Activated CD4-positive, alpha-beta memory T cell treated with anti-CD3 and anti-CD28 coated beads for 36 hours (primary cell): ENCODE measurements at regions of chr4 and their contacts with region 1.

Region 1: DNA sequence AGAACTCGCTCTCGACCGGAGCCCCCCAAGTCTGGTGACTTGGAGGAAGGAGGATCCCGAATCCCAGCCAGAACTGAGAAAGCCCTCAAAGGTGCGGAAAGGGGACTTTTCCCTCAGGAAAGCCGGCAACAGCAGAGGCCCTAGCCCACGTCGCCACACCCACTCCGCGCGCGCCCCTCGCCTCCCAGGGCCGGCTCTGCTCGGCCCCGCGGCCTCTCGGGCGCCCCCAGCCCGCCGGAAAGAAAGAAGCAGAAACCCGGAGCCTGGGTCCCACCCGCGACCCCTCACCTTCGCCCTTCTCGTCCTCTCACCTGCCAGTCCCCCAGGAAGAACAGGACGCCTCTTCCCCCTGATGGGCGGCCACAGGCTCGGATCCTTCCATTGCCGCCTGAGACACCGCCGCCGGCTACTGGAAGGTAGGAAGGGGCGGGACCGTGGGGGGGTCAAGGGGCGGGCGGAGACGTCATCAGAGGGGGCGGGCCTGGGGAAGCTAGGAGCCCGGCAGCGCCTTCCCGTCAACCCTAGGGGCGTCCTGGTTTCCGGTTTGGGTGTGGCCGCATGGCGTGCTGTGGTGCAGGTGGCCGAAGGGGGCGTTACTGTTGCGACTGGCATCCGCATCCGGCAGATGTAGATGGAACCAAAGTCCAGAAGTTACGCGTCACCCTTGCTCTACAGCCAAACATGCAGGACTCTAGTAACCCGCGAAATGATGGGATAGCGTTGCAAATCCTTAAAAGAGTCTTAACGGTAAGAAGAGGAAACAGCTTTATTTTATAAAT is at the start of gene UBA6:
- DNase-seq: peak; percentile 98
- H3K4me3 Mint-ChIP-seq: peak within 1 kb of the TSS; percentile 92
- H3K27ac Mint-ChIP-seq: peak within 1 kb of the TSS; percentile 90
- H3K4me1 Mint-ChIP-seq: peaks cover 55% of the 10 kb centered on the region
- H3K27me3 Mint-ChIP-seq: no peaks in the 10 kb centered on the region
- total RNA-seq, gene UBA6: 107 to 112 TPM

Region 2: DNA sequence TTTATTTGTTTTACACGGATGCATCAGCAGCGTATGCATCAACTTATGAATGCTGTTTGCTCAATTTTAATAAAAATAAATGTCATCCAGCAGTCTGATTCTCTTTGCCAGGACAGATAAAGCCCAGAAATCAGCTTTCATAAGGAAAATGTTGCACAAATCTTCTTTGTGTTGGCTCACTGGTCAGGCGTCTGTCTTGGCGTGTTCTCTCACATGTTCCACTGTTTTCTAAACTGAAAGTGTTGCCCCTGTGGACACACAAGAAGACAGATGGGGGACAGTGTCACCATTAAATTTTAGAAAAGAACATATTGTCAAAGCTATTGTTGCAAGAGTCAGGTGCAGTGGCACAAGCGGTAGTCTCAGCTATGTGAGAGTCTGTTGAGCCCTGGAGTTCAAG is 471.8 kb before region 1 on chr4:
- CTCF ChIA-PET with region 1: no interaction called
- POLR2A ChIA-PET with region 1: no interaction called
- intact Hi-C with region 1: no loop called
- DNase-seq: no peak
- H3K4me3 Mint-ChIP-seq: no peak overlapping the region
- H3K27ac Mint-ChIP-seq: no peak overlapping the region
- H3K4me1 Mint-ChIP-seq: no peaks in the 10 kb centered on the region
- H3K27me3 Mint-ChIP-seq: no peaks in the 10 kb centered on the region

Region 3: GRCh38 chr4:67380154-67380553 is 320.8 kb before region 1 on chr4:
- CTCF ChIA-PET with region 1: no interaction called
- POLR2A ChIA-PET with region 1: no interaction called
- intact Hi-C with region 1: no loop called
- DNase-seq: no peak
- H3K4me3 Mint-ChIP-seq: no peak overlapping the region
- H3K27ac Mint-ChIP-seq: no peak overlapping the region
- H3K4me1 Mint-ChIP-seq: no peaks in the 10 kb centered on the region
- H3K27me3 Mint-ChIP-seq: no peaks in the 10 kb centered on the region

Region 4: DNA sequence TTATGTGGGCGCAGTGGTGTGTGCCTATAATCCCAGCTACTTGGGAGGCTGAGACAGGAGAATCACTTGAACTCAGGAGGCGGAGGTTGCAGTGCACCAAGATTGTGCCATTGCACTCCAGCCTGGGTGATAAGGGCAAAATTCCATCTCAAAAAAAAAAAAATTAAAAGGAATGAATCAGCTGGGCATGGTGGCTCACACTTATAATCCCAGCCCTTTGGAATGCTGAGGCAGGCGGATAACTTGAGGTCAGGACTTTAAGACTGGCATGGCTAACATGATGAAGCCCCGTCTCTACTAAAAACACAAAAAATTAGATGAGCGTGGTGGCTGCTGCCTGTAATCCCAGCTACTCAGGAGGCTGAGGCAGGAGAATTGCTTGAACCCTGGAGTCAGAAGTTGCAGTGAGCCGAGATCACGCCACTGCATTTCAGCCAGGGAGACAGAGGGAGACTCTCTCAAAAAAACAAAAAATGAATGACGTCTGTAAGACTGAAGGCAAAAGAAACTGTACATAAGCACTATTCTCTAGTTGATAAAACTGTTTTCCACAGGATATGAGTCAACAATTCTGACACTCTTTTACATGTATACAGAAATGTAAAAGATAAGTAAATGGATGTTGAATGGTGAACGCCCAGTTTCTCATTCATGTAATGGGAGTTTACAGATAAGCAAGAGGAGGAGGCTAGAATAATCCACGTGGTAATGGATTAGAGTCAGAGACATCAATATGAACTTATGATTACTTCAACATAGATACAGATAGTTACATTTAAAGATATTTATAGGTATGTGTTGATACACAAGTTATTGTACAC is 177.9 kb before region 1 on chr4:
- CTCF ChIA-PET with region 1: no interaction called
- POLR2A ChIA-PET with region 1: no interaction called
- intact Hi-C with region 1: loop called (anchors 1 kb)
- DNase-seq: peak; percentile 43
- H3K4me3 Mint-ChIP-seq: peak overlapping the region; percentile 26
- H3K27ac Mint-ChIP-seq: peak overlapping the region; percentile 94
- H3K4me1 Mint-ChIP-seq: peaks cover 67% of the 10 kb centered on the region
- H3K27me3 Mint-ChIP-seq: no peaks in the 10 kb centered on the region

Region 5: DNA sequence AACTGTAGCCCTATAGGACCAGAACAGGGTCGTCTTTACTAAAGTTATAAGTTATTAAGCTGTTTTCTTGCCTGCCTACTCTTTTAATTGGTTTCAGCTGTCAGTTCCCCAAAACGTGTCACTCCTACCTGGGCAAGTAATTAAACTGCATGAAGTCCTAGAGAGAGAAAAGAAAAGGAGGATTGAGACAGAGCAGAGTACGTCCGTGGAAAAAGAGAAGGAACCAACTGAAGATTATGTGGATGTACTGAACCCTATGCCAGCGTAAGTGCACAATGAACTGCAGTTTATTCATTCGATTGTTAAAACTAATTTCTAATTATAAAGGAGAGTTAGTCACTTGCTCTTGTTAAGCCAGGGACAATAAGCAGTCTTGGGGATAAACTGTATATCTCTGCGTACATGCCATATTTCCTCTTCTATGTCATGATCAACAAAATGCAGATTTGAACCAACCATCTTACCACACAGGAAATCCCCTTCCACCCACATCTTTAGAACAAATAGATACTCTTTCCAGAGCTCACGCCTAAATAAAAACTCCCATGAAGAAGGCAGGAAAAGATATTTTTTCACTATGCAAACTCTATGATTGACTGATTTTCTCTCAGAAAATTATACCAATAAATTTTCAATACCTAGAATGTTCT is 119.6 kb before region 1 on chr4:
- CTCF ChIA-PET with region 1: no interaction called
- POLR2A ChIA-PET with region 1: no interaction called
- intact Hi-C with region 1: loop called (anchors 1 kb)
- DNase-seq: no peak
- H3K4me3 Mint-ChIP-seq: peak overlapping the region; percentile 48
- H3K27ac Mint-ChIP-seq: peak overlapping the region; percentile 59
- H3K4me1 Mint-ChIP-seq: peaks cover 20% of the 10 kb centered on the region
- H3K27me3 Mint-ChIP-seq: no peaks in the 10 kb centered on the region

Region 6: DNA sequence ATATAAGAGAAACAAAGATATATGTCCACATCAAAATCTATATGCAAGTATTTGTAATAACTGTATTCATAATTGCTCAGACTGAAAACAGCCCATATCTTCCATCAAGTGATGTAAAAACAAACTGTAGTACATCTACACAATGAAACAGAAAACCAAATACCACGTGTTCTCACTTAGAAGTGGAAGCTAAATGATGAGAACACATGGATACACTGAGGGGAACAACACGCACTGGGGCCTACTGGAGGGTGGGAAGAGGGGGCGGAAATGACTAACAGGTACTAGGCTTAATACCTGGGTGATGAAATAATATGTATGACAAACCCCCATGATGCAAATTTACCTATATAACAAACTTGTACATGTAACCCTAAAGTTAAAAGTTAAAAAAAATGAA is 42.6 kb before region 1 on chr4:
- CTCF ChIA-PET with region 1: no interaction called
- POLR2A ChIA-PET with region 1: no interaction called
- intact Hi-C with region 1: loop called (anchors 1 kb)
- DNase-seq: peak; percentile 63
- H3K4me3 Mint-ChIP-seq: no peak overlapping the region
- H3K27ac Mint-ChIP-seq: peak overlapping the region; percentile 63
- H3K4me1 Mint-ChIP-seq: peaks cover 24% of the 10 kb centered on the region
- H3K27me3 Mint-ChIP-seq: no peaks in the 10 kb centered on the region

Region 7: DNA sequence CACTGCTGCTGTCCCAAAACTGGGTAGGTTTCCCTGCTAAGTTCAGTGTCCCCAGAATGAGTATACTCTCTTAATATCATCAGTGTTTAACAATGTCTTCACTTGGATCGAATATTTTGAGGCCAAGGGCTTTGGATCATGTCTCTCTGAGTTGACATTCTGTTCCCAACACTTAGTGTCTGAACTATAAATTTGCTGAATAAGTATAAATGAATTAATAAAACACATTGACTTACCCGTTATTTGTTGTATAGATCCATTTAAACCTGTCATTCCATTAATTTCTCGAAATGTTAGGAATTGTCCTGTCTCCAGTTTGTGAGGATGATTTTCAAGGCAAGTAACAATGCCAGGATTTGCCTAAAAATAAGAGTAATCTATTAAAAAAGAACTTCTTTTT is 32.6 kb before region 1 on chr4:
- CTCF ChIA-PET with region 1: no interaction called
- POLR2A ChIA-PET with region 1: no interaction called
- intact Hi-C with region 1: no loop called
- DNase-seq: no peak
- H3K4me3 Mint-ChIP-seq: no peak overlapping the region
- H3K27ac Mint-ChIP-seq: no peak overlapping the region
- H3K4me1 Mint-ChIP-seq: peaks cover 5% of the 10 kb centered on the region
- H3K27me3 Mint-ChIP-seq: no peaks in the 10 kb centered on the region

Region 8: GRCh38 chr4:67684839-67685531 is 15.9 kb before region 1 on chr4:
- CTCF ChIA-PET with region 1: interaction called, 5 read pairs
- POLR2A ChIA-PET with region 1: no interaction called
- intact Hi-C with region 1: loop called (anchors 1 kb)
- DNase-seq: no peak
- H3K4me3 Mint-ChIP-seq: peak overlapping the region; percentile 14
- H3K27ac Mint-ChIP-seq: peak overlapping the region; percentile 81
- H3K4me1 Mint-ChIP-seq: peaks cover 32% of the 10 kb centered on the region
- H3K27me3 Mint-ChIP-seq: no peaks in the 10 kb centered on the region

Region 9: GRCh38 chr4:67746797-67747495 is 46.0 kb after region 1 on chr4:
- CTCF ChIA-PET with region 1: interaction called, 8 read pairs
- POLR2A ChIA-PET with region 1: interaction called, 3 read pairs
- intact Hi-C with region 1: loop called (anchors 2 kb)
- DNase-seq: no peak
- H3K4me3 Mint-ChIP-seq: no peak overlapping the region
- H3K27ac Mint-ChIP-seq: no peak overlapping the region
- H3K4me1 Mint-ChIP-seq: peaks cover 9% of the 10 kb centered on the region
- H3K27me3 Mint-ChIP-seq: no peaks in the 10 kb centered on the region

Region 10: GRCh38 chr4:68349649-68350360 is 648.9 kb after region 1 on chr4 and contains the start of gene YTHDC1:
- CTCF ChIA-PET with region 1: no interaction called
- POLR2A ChIA-PET with region 1: no interaction called
- intact Hi-C with region 1: loop called (anchors 1 kb)
- DNase-seq: peak; percentile 97
- H3K4me3 Mint-ChIP-seq: peak within 1 kb of the TSS; percentile 97
- H3K27ac Mint-ChIP-seq: peak within 1 kb of the TSS; percentile 98
- H3K4me1 Mint-ChIP-seq: peaks cover 33% of the 10 kb centered on the region
- H3K27me3 Mint-ChIP-seq: no peaks in the 10 kb centered on the region
- total RNA-seq, gene YTHDC1: 66.8 to 68.5 TPM